Vagina (tissue), 2 donors: ENCODE measurements at regions of chr5 and their contacts with region 1.

Region 1: GRCh38 chr5:180950291-180950949 is 38.2 kb upstream of the BTNL3 start:
- DNase-seq: no peak
- H3K4me3 ChIP-seq: no peak overlapping the region
- H3K27ac ChIP-seq: no peak overlapping the region
- H3K4me1 ChIP-seq: no peaks in the 10 kb centered on the region
- H3K27me3 ChIP-seq: no peaks in the 10 kb centered on the region
- CTCF ChIP-seq: no peak
- POLR2A ChIP-seq: no peak

Region 2: DNA sequence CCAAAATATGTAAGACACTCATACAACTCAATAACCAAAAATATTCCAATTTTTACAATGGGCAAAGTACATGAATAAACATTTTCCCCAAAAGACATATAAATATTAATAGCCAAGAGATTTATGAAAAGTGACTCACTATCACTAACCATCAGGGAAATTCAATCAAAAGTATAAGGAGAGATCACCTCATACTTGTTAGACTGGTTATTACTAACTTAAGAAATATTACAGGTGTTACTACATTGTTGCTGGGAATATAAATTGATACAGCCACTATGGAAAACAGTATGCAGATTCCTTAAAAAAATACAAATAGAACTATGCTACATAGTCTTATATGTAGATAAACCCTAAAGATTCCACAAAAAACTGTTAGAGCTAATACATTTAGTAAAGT is 29.7 kb before region 1 on chr5:
- intact Hi-C with region 1: no loop called
- DNase-seq: no peak
- H3K4me3 ChIP-seq: no peak overlapping the region
- H3K27ac ChIP-seq: no peak overlapping the region
- H3K4me1 ChIP-seq: no peaks in the 10 kb centered on the region
- H3K27me3 ChIP-seq: no peaks in the 10 kb centered on the region
- CTCF ChIP-seq: no peak
- POLR2A ChIP-seq: no peak

Region 3: DNA sequence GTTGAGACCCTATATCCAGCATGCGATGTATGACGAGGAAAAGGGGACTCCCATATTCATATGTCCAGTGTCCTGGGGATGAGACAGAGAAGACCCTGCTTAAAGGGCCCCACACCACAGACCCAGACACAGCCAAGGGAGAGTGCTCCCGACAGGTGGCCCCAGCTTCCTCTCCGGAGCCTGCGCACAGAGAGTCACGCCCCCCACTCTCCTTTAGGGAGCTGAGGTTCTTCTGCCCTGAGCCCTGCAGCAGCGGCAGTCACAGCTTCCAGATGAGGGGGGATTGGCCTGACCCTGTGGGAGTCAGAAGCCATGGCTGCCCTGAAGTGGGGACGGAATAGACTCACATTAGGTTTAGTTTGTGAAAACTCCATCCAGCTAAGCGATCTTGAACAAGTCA is 55.4 kb after region 1 on chr5:
- intact Hi-C with region 1: loop called (anchors 5 kb)
- DNase-seq: no peak
- H3K4me3 ChIP-seq: no peak overlapping the region
- H3K27ac ChIP-seq: no peak overlapping the region
- H3K4me1 ChIP-seq: no peaks in the 10 kb centered on the region
- H3K27me3 ChIP-seq: no peaks in the 10 kb centered on the region
- CTCF ChIP-seq: no peak
- POLR2A ChIP-seq: no peak